ENCODE measurements at regions of chr18 and their contacts with region 1.

Region 1: GRCh38 chr18:57519671-57520424 is 66.7 kb downstream of the FECH start:
- DNase-seq: peak in 1 of 2 experiments; percentile 52
- H3K4me3 ChIP-seq: no peak overlapping the region
- H3K27ac ChIP-seq: no peak overlapping the region
- H3K4me1 ChIP-seq: 0 out of 2 replicates have a peak, but pooled peaks cover 4% of the 10 kb centered on the region
- H3K27me3 ChIP-seq: no peaks in the 10 kb centered on the region
- CTCF ChIP-seq: no peak

Region 2: GRCh38 chr18:57107140-57107832 is 412.6 kb before region 1 on chr18:
- CTCF ChIA-PET with region 1: interaction called, 13 read pairs
- POLR2A ChIA-PET with region 1: no interaction called
- intact Hi-C with region 1: no loop called
- DNase-seq: no peak
- H3K4me3 ChIP-seq: no peak overlapping the region
- H3K27ac ChIP-seq: no peak overlapping the region
- H3K4me1 ChIP-seq: no peaks in the 10 kb centered on the region
- H3K27me3 ChIP-seq: no peaks in the 10 kb centered on the region
- CTCF ChIP-seq: no peak

Region 3: DNA sequence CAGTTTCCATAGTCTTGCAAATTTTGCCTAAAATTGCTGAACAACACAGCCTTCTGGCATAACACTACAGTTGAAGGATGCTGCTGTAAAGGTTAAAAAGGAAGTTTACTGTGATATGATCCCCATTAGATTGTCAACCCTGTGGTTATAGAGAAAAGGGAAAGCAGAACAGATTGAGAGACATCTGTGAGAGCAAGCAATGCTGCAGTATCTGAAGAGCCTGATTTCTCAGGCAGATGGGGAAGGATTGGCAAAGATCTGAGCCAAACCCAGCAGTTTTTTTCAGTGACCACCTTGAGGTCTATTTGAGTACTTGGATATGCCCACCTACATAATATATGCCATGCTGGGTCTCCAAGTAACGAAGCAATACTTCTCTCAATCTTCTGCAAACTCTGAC is 176.0 kb before region 1 on chr18:
- CTCF ChIA-PET with region 1: no interaction called
- POLR2A ChIA-PET with region 1: no interaction called
- intact Hi-C with region 1: no loop called
- DNase-seq: no peak
- H3K4me3 ChIP-seq: no peak overlapping the region
- H3K27ac ChIP-seq: no peak overlapping the region
- H3K4me1 ChIP-seq: no peaks in the 10 kb centered on the region
- H3K27me3 ChIP-seq: peaks cover 14% of the 10 kb centered on the region; the same call in 1 of the 2 replicates
- CTCF ChIP-seq: no peak

Region 4: GRCh38 chr18:57727952-57728807 is 208.3 kb after region 1 on chr18:
- CTCF ChIA-PET with region 1: no interaction called
- POLR2A ChIA-PET with region 1: no interaction called
- intact Hi-C with region 1: no loop called
- DNase-seq: no peak
- H3K4me3 ChIP-seq: no peak overlapping the region
- H3K27ac ChIP-seq: peak overlapping the region; percentile 83
- H3K4me1 ChIP-seq: peaks cover 22% of the 10 kb centered on the region
- H3K27me3 ChIP-seq: no peaks in the 10 kb centered on the region
- CTCF ChIP-seq: no peak